Heart right ventricle (tissue), 16 donors: ENCODE measurements at regions of chr18 and their contacts with region 1.

Region 1: GRCh38 chr18:23918401-23919032 is 96.0 kb upstream of the TTC39C start:
- DNase-seq: peak; percentile 66 to 69
- ATAC-seq: peak in 7 of 8 donors; percentile 64 to 78 (median 70)
- H3K4me3 ChIP-seq: no peak overlapping the region
- H3K27ac ChIP-seq: no peak overlapping the region
- H3K4me1 ChIP-seq: peaks cover 0 to 6% (median 0%) of the 10 kb centered on the region in 9 donors
- H3K27me3 ChIP-seq: no peaks in the 10 kb centered on the region
- CTCF ChIP-seq: peak; percentile 75 to 93 (median 87)

Region 2: DNA sequence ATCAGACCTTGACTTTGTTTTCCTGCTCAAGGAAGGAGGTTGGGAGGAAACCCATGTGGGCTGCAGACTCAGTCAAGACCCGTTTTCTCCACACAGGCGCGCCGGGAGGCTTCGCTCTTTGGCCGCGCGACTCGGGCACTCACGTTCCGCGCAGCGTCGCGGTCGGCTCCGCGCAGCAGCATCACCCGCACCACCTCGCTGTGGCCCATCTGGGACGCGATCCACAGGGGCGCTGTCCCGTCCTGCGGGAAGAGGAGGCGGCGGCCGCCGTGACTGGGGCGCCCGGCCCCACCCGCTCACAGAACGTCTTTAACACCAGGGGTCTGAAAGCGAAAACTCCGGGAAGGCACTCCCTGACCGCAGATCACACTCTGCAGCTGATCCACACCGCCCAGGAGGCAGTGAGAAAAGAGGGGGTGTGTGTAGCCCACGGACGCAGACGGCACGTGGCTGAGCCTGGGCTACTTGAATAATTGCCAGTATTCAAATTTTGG is 299.1 kb before region 1 on chr18:
- intact Hi-C with region 1: loop called in 7 of 10 experiments (anchors 2 to 10 kb)
- DNase-seq: peak in 1 of 2 donors; percentile 35
- ATAC-seq: peak; percentile 42 to 79 (median 72)
- H3K4me3 ChIP-seq: peak overlapping the region in 9 of 10 donors; percentile 23 to 69 (median 55)
- H3K27ac ChIP-seq: peak overlapping the region in 5 of 10 donors; percentile 20 to 44 (median 36)
- H3K4me1 ChIP-seq: peaks cover 0 to 15% (median 10%) of the 10 kb centered on the region in 9 donors
- H3K27me3 ChIP-seq: peaks cover 0 to 35% (median 0%) of the 10 kb centered on the region in 7 donors
- CTCF ChIP-seq: peak in 1 of 9 donors; percentile 7

Region 3: GRCh38 chr18:23629444-23629946 is 289.0 kb before region 1 on chr18:
- intact Hi-C with region 1: loop called in 6 of 10 experiments (anchors 5 to 10 kb)
- DNase-seq: no peak
- ATAC-seq: no peak
- H3K4me3 ChIP-seq: no peak overlapping the region
- H3K27ac ChIP-seq: no peak overlapping the region
- H3K4me1 ChIP-seq: peaks cover 0 to 21% (median 8%) of the 10 kb centered on the region in 9 donors
- H3K27me3 ChIP-seq: no peaks in the 10 kb centered on the region
- CTCF ChIP-seq: no peak

Region 4: DNA sequence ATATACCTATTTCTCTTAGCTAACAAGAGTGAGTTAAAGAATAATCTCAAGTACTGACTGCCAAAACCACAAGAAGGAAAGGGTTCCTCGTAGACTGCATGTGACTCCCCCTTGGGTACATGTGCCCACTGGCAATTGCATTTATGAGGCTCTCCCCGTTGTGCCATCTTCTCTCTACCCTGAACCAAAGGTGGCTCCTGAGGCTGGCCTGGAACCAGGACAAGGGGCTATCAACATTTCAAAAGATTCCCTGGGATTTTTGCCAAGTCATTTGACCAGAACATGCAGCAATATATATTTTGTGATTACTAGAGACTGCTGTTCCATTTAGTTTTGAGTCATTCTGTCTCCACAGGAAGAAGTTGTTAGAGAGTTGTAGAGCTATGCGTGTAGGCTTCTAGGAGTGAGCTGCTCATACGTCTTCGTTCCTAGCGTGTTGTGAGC is 183.5 kb before region 1 on chr18:
- intact Hi-C with region 1: loop called in 1 of 10 experiments (anchors 10 kb)
- DNase-seq: no peak
- ATAC-seq: no peak
- H3K4me3 ChIP-seq: no peak overlapping the region
- H3K27ac ChIP-seq: no peak overlapping the region
- H3K4me1 ChIP-seq: peaks cover 0 to 25% (median 0%) of the 10 kb centered on the region in 9 donors
- H3K27me3 ChIP-seq: peaks cover 0 to 5% (median 0%) of the 10 kb centered on the region in 7 donors
- CTCF ChIP-seq: no peak

Region 5: GRCh38 chr18:23812546-23813440 is 105.7 kb before region 1 on chr18:
- intact Hi-C with region 1: loop called in 3 of 10 experiments (anchors 5 to 10 kb)
- DNase-seq: no peak
- ATAC-seq: no peak
- H3K4me3 ChIP-seq: no peak overlapping the region
- H3K27ac ChIP-seq: no peak overlapping the region
- H3K4me1 ChIP-seq: peaks cover 0 to 14% (median 0%) of the 10 kb centered on the region in 9 donors
- H3K27me3 ChIP-seq: no peaks in the 10 kb centered on the region
- CTCF ChIP-seq: peak; percentile 28 to 71 (median 62)

Region 6: DNA sequence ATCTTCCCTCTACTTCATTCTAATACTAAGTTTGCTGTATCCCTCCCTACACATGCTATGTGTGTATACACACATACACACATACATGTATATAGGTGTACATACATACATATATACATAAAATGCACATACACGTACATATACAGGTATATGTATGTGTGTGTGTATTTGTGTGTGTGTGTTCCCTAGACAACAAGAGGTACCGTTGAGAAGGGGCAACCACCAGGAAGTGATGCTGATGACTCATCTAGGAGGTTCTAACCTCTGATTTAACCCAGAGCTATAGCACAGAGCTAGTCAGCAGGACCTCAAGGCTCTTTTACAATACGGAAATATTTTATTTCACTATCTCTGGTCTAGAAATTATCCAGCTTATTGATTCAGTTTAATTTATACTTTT is 90.1 kb before region 1 on chr18:
- intact Hi-C with region 1: loop called in 6 of 10 experiments (anchors 5 to 10 kb)
- DNase-seq: no peak
- ATAC-seq: peak in 1 of 8 donors; percentile 23
- H3K4me3 ChIP-seq: no peak overlapping the region
- H3K27ac ChIP-seq: no peak overlapping the region
- H3K4me1 ChIP-seq: peaks cover 0 to 31% (median 11%) of the 10 kb centered on the region in 9 donors
- H3K27me3 ChIP-seq: no peaks in the 10 kb centered on the region
- CTCF ChIP-seq: no peak

Region 7: DNA sequence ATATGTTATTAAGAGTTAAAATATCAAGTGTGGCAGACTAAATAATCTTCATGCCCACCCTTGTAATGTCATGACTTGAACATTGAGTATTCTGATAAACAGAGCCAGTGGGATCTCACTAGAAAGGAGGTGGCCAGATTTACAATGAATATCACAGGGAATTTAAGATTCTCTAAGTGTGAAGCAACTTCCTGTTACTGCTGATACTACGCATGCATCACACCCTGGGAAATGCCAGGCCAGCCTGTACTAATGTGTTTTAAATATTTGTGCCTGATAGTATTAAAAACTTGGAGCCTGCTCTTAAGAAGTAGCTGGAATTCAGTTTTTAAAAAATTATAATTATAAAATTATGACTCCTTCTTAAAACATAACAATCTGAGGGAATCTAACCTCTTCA is 80.9 kb before region 1 on chr18:
- intact Hi-C with region 1: loop called in 1 of 10 experiments (anchors 10 kb)
- DNase-seq: no peak
- ATAC-seq: peak in 6 of 8 donors; percentile 47 to 81 (median 73)
- H3K4me3 ChIP-seq: no peak overlapping the region
- H3K27ac ChIP-seq: peak overlapping the region in 8 of 10 donors; percentile 16 to 68 (median 35)
- H3K4me1 ChIP-seq: peaks cover 0 to 27% (median 16%) of the 10 kb centered on the region in 9 donors
- H3K27me3 ChIP-seq: no peaks in the 10 kb centered on the region
- CTCF ChIP-seq: no peak

Region 8: DNA sequence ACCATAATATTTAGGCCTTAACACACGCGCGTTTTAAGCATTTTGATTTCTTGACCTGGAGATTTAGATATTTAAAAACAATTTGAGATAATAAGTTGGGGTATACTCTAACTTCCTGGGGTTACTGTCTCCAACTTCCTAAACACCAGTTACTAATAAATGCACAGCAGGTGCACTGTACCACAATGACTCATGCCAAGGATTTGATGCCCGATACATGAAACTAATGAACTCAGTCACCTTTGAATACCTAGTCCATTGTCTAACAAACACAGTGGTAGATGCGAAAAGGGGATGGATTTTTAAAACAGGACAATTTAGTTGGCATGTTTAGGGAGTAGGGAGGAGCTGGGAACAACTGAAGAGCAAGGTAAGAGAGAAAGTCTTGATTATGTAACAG is 241.6 kb after region 1 on chr18:
- intact Hi-C with region 1: no loop called
- DNase-seq: no peak
- ATAC-seq: no peak
- H3K4me3 ChIP-seq: no peak overlapping the region
- H3K27ac ChIP-seq: no peak overlapping the region
- H3K4me1 ChIP-seq: no peaks in the 10 kb centered on the region
- H3K27me3 ChIP-seq: no peaks in the 10 kb centered on the region
- CTCF ChIP-seq: no peak